WTC11 (cell line): ENCODE measurements at regions of chr9 and their contacts with region 1.

Region 1: GRCh38 chr9:34989003-34989945 is at the start of gene DNAJB5:
- DNase-seq: peak; percentile 98
- ATAC-seq: peak; percentile 85
- H3K4me3 Mint-ChIP-seq: peak within 1 kb of the TSS; percentile 82
- H3K27ac Mint-ChIP-seq: peak within 1 kb of the TSS; percentile 98
- H3K4me1 Mint-ChIP-seq: peaks cover 60% of the 10 kb centered on the region
- H3K27me3 Mint-ChIP-seq: peaks cover 4% of the 10 kb centered on the region
- CTCF ChIP-seq: no peak
- total RNA-seq, gene DNAJB5: 26.7 to 30.0 TPM (median 28.6 TPM) in 3 replicates

Region 2: DNA sequence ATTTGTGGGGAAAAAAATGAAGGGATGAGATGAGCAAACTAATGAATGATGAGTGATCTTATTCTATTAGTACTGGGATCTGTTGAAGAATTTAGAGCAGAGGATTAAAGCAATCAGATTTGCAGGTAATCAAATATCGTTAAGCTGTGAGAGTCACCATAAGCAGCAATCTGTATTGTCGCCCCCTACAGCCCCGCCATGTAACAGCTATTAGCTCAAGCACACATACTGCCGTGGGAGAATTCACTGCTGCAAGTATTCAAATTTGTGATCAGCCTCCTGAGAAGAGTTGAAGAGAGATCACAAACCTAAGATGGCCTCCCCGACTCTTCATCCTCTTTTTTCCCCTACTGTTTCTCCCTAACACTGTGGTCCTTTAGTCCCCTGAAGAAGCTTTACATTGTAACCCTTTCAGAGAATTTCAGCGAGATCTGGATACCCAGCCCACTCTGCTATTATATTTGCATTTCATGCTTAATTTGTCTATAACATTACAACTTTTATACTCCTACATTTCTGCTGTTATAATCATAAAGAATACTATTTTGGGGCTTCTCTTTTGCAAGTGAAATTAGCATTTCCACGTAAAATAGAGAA is 59.7 kb before region 1 on chr9:
- CTCF ChIA-PET with region 1: interaction called, 18 read pairs
- POLR2A ChIA-PET with region 1: no interaction called
- DNase-seq: peak; percentile 68
- ATAC-seq: peak; percentile 97
- H3K4me3 Mint-ChIP-seq: no peak overlapping the region
- H3K27ac Mint-ChIP-seq: no peak overlapping the region
- H3K4me1 Mint-ChIP-seq: no peaks in the 10 kb centered on the region; the same call in 1 of the 2 replicates
- H3K27me3 Mint-ChIP-seq: peaks cover 5% of the 10 kb centered on the region
- CTCF ChIP-seq: peak; percentile 63

Region 3: GRCh38 chr9:34961574-34962490 is 27.4 kb before region 1 on chr9:
- CTCF ChIA-PET with region 1: interaction called, 22 read pairs
- POLR2A ChIA-PET with region 1: no interaction called
- DNase-seq: no peak
- ATAC-seq: no peak
- H3K4me3 Mint-ChIP-seq: no peak overlapping the region
- H3K27ac Mint-ChIP-seq: no peak overlapping the region
- H3K4me1 Mint-ChIP-seq: peaks cover 19% of the 10 kb centered on the region
- H3K27me3 Mint-ChIP-seq: peaks cover 42% of the 10 kb centered on the region
- CTCF ChIP-seq: no peak

Region 4: GRCh38 chr9:34974664-34975063 is 14.6 kb before region 1 on chr9:
- CTCF ChIA-PET with region 1: interaction called, 10 read pairs
- POLR2A ChIA-PET with region 1: no interaction called
- DNase-seq: no peak
- ATAC-seq: no peak
- H3K4me3 Mint-ChIP-seq: no peak overlapping the region
- H3K27ac Mint-ChIP-seq: no peak overlapping the region
- H3K4me1 Mint-ChIP-seq: peaks cover 12% of the 10 kb centered on the region
- H3K27me3 Mint-ChIP-seq: no peaks in the 10 kb centered on the region
- CTCF ChIP-seq: no peak

Region 5: DNA sequence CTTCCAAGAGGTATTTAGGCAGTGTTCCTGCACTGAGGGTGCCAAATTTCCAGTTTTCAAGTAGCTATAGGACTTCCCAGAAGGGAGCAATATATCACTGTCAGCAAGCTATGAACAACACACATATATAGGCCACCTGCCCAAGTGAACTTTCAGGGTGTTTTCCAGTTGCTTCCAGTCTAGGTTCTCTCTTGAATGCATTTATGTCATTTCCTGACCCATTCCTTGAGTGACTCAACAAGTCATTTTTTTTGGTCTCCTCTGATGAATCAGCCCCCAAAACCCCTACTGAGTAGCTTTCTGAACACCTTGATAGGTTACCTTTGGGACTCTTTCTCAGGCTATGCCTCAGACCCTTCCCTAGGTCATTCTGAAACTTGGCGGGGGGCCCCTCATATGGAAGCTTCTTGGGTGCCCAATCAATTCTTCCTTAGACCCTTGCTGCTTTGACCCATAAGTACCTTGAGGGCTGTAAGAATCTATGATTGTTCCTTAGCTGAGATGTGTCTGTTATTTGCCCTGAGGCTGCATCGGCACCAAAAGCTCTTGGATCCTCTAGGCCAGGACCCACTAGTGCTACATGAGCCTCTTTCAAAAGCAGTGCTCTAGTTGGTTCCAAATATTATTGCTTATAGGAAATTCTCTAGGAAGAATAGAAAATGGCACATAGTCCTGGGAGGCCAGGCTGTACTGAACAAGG is 12.7 kb after region 1 on chr9:
- CTCF ChIA-PET with region 1: interaction called, 14 read pairs
- POLR2A ChIA-PET with region 1: interaction called, 8 read pairs
- DNase-seq: no peak
- ATAC-seq: no peak
- H3K4me3 Mint-ChIP-seq: no peak overlapping the region
- H3K27ac Mint-ChIP-seq: no peak overlapping the region
- H3K4me1 Mint-ChIP-seq: peaks cover 49% of the 10 kb centered on the region
- H3K27me3 Mint-ChIP-seq: no peaks in the 10 kb centered on the region
- CTCF ChIP-seq: no peak

Region 6: GRCh38 chr9:35051069-35051967 is 62.0 kb after region 1 on chr9:
- CTCF ChIA-PET with region 1: interaction called, 41 read pairs
- POLR2A ChIA-PET with region 1: interaction called, 5 read pairs
- DNase-seq: peak; percentile 71
- ATAC-seq: peak; percentile 84
- H3K4me3 Mint-ChIP-seq: no peak overlapping the region
- H3K27ac Mint-ChIP-seq: peak overlapping the region; percentile 54
- H3K4me1 Mint-ChIP-seq: peaks cover 3% of the 10 kb centered on the region; the same call in 1 of the 2 replicates
- H3K27me3 Mint-ChIP-seq: no peaks in the 10 kb centered on the region
- CTCF ChIP-seq: peak; percentile 68

Region 7: GRCh38 chr9:35071814-35072460 is 82.7 kb after region 1 on chr9:
- CTCF ChIA-PET with region 1: interaction called, 26 read pairs
- POLR2A ChIA-PET with region 1: interaction called, 10 read pairs
- DNase-seq: peak; percentile 85
- ATAC-seq: peak; percentile 68
- H3K4me3 Mint-ChIP-seq: peak overlapping the region; percentile 93
- H3K27ac Mint-ChIP-seq: peak overlapping the region; percentile 96
- H3K4me1 Mint-ChIP-seq: peaks cover 24% of the 10 kb centered on the region
- H3K27me3 Mint-ChIP-seq: no peaks in the 10 kb centered on the region
- CTCF ChIP-seq: no peak